ENCODE measurements at regions of chr2 and their contacts with region 1.

Region 1: DNA sequence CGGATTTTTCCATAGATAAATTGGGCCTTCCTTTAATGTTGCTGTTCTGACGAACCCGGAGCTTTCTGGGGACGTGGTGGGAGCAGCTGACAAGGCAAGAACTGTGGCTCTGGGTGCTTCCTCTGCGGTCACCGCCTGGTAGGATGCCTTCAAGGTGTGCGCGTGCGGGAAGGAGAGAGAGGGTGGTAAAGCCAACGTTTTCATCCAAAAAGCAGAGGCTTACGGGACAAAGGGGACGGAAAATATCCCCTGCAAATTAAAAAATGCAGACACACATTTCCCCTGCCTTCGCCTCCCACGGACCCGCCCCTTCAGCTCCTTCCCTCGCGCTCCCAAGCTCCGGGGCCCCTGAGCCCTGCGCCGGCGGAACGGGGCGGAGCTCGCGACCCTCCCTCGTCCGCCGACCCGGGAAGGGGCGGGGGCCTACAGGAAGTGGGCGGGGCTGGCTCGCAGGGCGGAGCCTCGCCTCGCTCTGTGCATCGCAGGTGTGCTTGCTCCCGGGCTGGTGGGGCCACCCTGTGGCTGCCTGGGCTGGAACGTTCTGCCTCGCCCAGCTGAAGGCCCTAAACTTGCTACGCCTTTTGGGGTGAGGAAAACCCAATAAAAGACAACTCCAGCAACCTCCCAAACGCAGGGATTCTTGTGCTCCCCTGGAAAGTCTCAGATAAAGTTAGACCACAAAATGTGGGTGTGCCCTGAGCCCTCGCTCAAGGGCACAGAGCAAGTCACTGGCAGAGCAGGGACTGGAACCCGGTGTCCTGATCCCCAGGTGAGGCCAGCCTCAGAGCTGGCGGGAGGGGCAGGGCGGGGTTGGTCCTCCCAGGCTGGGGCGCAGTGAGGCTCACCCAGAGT is 25.4 kb upstream of the SLC66A3 start:
- DNase-seq: peak; percentile 90 to 95
- H3K4me3 ChIP-seq: peak overlapping the region; percentile 42
- H3K4me3 Mint-ChIP-seq: peak overlapping the region; percentile 68
- H3K27ac Mint-ChIP-seq: no peak overlapping the region
- H3K4me1 ChIP-seq: peaks cover 5% of the 10 kb centered on the region
- H3K4me1 Mint-ChIP-seq: no peaks in the 10 kb centered on the region
- H3K27me3 ChIP-seq: no peaks in the 10 kb centered on the region
- H3K27me3 Mint-ChIP-seq: no peaks in the 10 kb centered on the region
- CTCF ChIP-seq: peak; percentile 56 to 79

Region 2: DNA sequence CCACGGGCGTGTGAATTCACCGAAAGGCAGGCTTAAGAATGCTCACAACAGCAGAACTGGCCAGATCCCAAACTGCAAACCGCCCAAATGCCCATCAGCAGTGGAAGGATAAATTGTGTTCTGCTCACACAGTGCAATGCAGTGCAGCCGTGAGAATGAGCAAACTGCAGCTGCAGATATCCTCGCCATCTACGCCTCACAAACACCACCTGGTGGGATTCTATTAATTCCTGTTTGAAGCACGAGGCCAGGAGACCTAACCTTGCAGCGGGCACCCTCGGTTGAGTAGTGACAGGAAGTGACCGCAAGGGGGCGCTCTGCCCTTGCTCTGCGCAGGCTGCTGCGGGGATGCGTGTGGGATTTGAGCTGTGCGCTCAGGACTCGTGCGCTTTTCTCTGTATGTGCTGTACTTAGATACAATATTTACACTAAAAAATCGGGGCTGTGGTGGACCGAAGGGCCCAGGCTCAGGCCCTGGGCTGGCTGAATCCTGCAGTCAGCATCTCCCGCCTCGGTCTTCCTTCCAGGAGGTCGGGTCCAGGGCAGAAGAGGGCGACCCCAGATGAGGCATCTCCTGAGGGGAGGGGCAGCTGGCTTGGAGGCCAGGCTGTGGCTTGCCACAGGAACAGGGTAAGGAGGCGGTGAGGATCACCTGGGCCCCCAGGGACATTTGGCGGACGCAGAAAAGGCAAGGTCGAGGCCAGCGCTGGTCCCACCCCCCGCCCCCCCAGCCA is 297.5 kb before region 1 on chr2:
- CTCF ChIA-PET with region 1: interaction called, 29 read pairs
- POLR2A ChIA-PET with region 1: no interaction called
- intact Hi-C with region 1: no loop called
- DNase-seq: peak; percentile 85 to 92
- H3K4me3 ChIP-seq: no peak overlapping the region
- H3K4me3 Mint-ChIP-seq: no peak overlapping the region
- H3K27ac Mint-ChIP-seq: no peak overlapping the region
- H3K4me1 ChIP-seq: no peaks in the 10 kb centered on the region
- H3K4me1 Mint-ChIP-seq: no peaks in the 10 kb centered on the region
- H3K27me3 ChIP-seq: no peaks in the 10 kb centered on the region
- H3K27me3 Mint-ChIP-seq: peaks cover 15% of the 10 kb centered on the region
- CTCF ChIP-seq: peak; percentile 98

Region 3: GRCh38 chr2:11154923-11155380 is 25.1 kb after region 1 on chr2:
- CTCF ChIA-PET with region 1: interaction called, 10 read pairs
- POLR2A ChIA-PET with region 1: interaction called, 11 read pairs
- intact Hi-C with region 1: loop called (anchors 2 kb)
- DNase-seq: peak; percentile 99
- H3K4me3 ChIP-seq: peak overlapping the region; percentile 34
- H3K4me3 Mint-ChIP-seq: peak overlapping the region; percentile 55
- H3K27ac Mint-ChIP-seq: peak overlapping the region; percentile 92
- H3K4me1 ChIP-seq: peaks cover 11% of the 10 kb centered on the region
- H3K4me1 Mint-ChIP-seq: no peaks in the 10 kb centered on the region
- H3K27me3 ChIP-seq: no peaks in the 10 kb centered on the region
- H3K27me3 Mint-ChIP-seq: no peaks in the 10 kb centered on the region
- CTCF ChIP-seq: no peak

Region 4: GRCh38 chr2:11203480-11203879 is 73.7 kb after region 1 on chr2:
- CTCF ChIA-PET with region 1: interaction called, 4 read pairs
- POLR2A ChIA-PET with region 1: no interaction called
- intact Hi-C with region 1: loop called (anchors 5 kb)
- DNase-seq: no peak
- H3K4me3 ChIP-seq: no peak overlapping the region
- H3K4me3 Mint-ChIP-seq: no peak overlapping the region
- H3K27ac Mint-ChIP-seq: no peak overlapping the region
- H3K4me1 ChIP-seq: no peaks in the 10 kb centered on the region
- H3K4me1 Mint-ChIP-seq: no peaks in the 10 kb centered on the region
- H3K27me3 ChIP-seq: no peaks in the 10 kb centered on the region
- H3K27me3 Mint-ChIP-seq: no peaks in the 10 kb centered on the region
- CTCF ChIP-seq: no peak

Region 5: GRCh38 chr2:11411768-11412448 is 282.1 kb after region 1 on chr2:
- CTCF ChIA-PET with region 1: interaction called, 18 read pairs
- POLR2A ChIA-PET with region 1: no interaction called
- intact Hi-C with region 1: loop called (anchors 1 kb)
- DNase-seq: peak; percentile 54 to 64
- H3K4me3 ChIP-seq: no peak overlapping the region
- H3K4me3 Mint-ChIP-seq: no peak overlapping the region
- H3K27ac Mint-ChIP-seq: no peak overlapping the region
- H3K4me1 ChIP-seq: no peaks in the 10 kb centered on the region
- H3K4me1 Mint-ChIP-seq: no peaks in the 10 kb centered on the region
- H3K27me3 ChIP-seq: no peaks in the 10 kb centered on the region
- H3K27me3 Mint-ChIP-seq: no peaks in the 10 kb centered on the region
- CTCF ChIP-seq: peak; percentile 78 to 82

Region 6: GRCh38 chr2:11446733-11447248 is 317.0 kb after region 1 on chr2:
- CTCF ChIA-PET with region 1: interaction called, 10 read pairs
- POLR2A ChIA-PET with region 1: no interaction called
- intact Hi-C with region 1: loop called (anchors 1 kb)
- DNase-seq: peak; percentile 47 to 64
- H3K4me3 ChIP-seq: no peak overlapping the region
- H3K4me3 Mint-ChIP-seq: no peak overlapping the region
- H3K27ac Mint-ChIP-seq: no peak overlapping the region
- H3K4me1 ChIP-seq: no peaks in the 10 kb centered on the region
- H3K4me1 Mint-ChIP-seq: no peaks in the 10 kb centered on the region
- H3K27me3 ChIP-seq: no peaks in the 10 kb centered on the region
- H3K27me3 Mint-ChIP-seq: no peaks in the 10 kb centered on the region
- CTCF ChIP-seq: peak; percentile 72

Region 7: GRCh38 chr2:11778923-11779757 is 649.3 kb after region 1 on chr2:
- CTCF ChIA-PET with region 1: no interaction called
- POLR2A ChIA-PET with region 1: no interaction called
- intact Hi-C with region 1: no loop called
- DNase-seq: peak; percentile 72 to 86
- H3K4me3 ChIP-seq: no peak overlapping the region
- H3K4me3 Mint-ChIP-seq: peak overlapping the region; percentile 54
- H3K27ac Mint-ChIP-seq: no peak overlapping the region
- H3K4me1 ChIP-seq: peaks cover 15% of the 10 kb centered on the region
- H3K4me1 Mint-ChIP-seq: peaks cover 13% of the 10 kb centered on the region
- H3K27me3 ChIP-seq: no peaks in the 10 kb centered on the region
- H3K27me3 Mint-ChIP-seq: no peaks in the 10 kb centered on the region
- CTCF ChIP-seq: peak; percentile 97 to 99

Measured in Caco-2 (cell line).